ENCODE measurements at regions of chr1 and their contacts with region 1.

Region 1: GRCh38 chr1:169586395-169587255 is at the start of gene F5:
- DNase-seq: peak; percentile 53 to 78 (median 74)
- ATAC-seq: peak; percentile 98
- H3K4me3 ChIP-seq: peak within 1 kb of the TSS; percentile 47
- H3K4me3 Mint-ChIP-seq: peak within 1 kb of the TSS; percentile 81 to 93 (median 90)
- H3K27ac ChIP-seq: peak within 1 kb of the TSS; percentile 66
- H3K27ac Mint-ChIP-seq: peak within 1 kb of the TSS; percentile 50 to 94 (median 86)
- H3K4me1 ChIP-seq: peaks cover 10 to 14% of the 10 kb centered on the region in 2 donors
- H3K4me1 Mint-ChIP-seq: peaks cover 18 to 71% (median 53%) of the 10 kb centered on the region in 7 donors
- H3K27me3 ChIP-seq: no peaks in the 10 kb centered on the region
- H3K27me3 Mint-ChIP-seq: peaks cover 0 to 4% (median 0%) of the 10 kb centered on the region in 5 donors
- total RNA-seq, gene F5: 3.7 to 14.6 (median 5.7) TPM

Region 2: DNA sequence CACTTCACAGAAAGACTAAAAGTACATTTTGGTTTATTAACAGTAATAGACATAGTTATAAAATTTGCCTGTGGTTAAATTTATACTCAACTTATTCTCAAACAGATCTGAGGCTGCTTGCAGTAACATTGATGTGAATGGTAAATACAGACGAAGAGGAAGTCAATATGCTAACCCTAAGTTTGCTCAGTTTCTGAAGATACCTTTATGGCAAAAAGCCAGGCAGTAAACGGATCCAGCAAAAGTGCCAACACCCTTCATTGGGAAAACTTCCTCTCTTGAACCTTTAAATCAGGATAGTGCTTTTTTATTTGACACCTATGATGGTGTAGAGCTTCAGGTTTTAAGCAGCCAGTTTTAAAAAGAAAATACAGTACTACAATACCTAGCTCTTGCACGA is 142.7 kb before region 1 on chr1:
- CTCF ChIA-PET with region 1: no interaction called
- POLR2A ChIA-PET with region 1: no interaction called
- intact Hi-C with region 1: no loop called
- DNase-seq: no peak
- ATAC-seq: no peak
- H3K4me3 ChIP-seq: no peak overlapping the region
- H3K4me3 Mint-ChIP-seq: no peak overlapping the region
- H3K27ac ChIP-seq: no peak overlapping the region
- H3K27ac Mint-ChIP-seq: no peak overlapping the region
- H3K4me1 ChIP-seq: no peaks in the 10 kb centered on the region
- H3K4me1 Mint-ChIP-seq: no peaks in the 10 kb centered on the region
- H3K27me3 ChIP-seq: no peaks in the 10 kb centered on the region
- H3K27me3 Mint-ChIP-seq: peaks cover 15 to 68% (median 18%) of the 10 kb centered on the region in 5 donors

Region 3: DNA sequence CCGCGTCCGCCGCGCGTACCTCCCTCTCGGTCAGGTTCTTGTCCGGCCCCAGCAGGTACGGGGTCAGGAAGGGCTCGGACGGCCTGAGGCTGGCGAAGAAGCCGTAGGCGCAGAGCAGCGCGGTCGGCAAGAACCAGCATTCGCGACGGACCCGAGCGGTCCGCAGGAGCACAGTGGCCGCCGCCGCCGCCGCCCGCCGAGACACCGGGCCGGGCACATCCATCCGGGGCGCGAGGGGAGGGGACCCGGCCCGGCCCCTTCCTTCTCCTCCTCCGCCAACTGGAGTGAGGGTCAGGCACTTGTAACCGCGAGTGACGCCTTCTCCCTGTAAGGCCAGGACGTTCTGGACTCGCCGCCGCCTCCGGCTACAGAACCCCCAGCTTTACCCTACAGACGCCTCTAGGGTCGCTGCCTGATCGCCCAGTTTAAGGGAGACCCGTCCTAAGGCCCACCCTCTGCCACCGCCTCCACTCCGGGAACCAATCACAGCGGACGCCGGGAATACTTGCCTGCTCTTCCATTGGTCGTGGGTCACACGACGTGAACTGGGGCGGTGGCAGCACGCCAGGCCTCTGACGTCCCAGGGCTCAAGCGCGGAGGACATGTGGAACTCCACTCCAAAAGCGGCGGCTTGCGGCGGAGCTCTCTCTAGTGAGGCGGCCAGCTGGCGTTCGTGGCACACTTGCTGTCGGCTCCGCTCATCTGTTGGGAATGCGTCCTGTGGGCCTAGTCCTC is 100.9 kb before region 1 on chr1 and contains the start of gene SLC19A2:
- CTCF ChIA-PET with region 1: no interaction called
- POLR2A ChIA-PET with region 1: no interaction called
- intact Hi-C with region 1: loop called in 1 of 2 experiments (anchors 2 kb)
- DNase-seq: peak; percentile 79 to 94 (median 89)
- ATAC-seq: peak; percentile 99
- H3K4me3 ChIP-seq: peak within 1 kb of the TSS; percentile 66
- H3K4me3 Mint-ChIP-seq: peak within 1 kb of the TSS; percentile 87 to 98 (median 94)
- H3K27ac ChIP-seq: peak within 1 kb of the TSS; percentile 81
- H3K27ac Mint-ChIP-seq: peak within 1 kb of the TSS; percentile 86 to 98 (median 94)
- H3K4me1 ChIP-seq: peaks cover 4 to 12% of the 10 kb centered on the region in 2 donors
- H3K4me1 Mint-ChIP-seq: peaks cover 35 to 56% (median 46%) of the 10 kb centered on the region in 7 donors
- H3K27me3 ChIP-seq: no peaks in the 10 kb centered on the region
- H3K27me3 Mint-ChIP-seq: peaks cover 0 to 8% (median 0%) of the 10 kb centered on the region in 5 donors
- total RNA-seq, gene SLC19A2: 3.7 to 5.9 (median 4.8) TPM

Region 4: GRCh38 chr1:169699711-169700110 is 113.1 kb after region 1 on chr1:
- CTCF ChIA-PET with region 1: interaction called, 11 read pairs
- POLR2A ChIA-PET with region 1: interaction called, 20 read pairs
- intact Hi-C with region 1: loop called (anchors 1 to 5 kb)
- DNase-seq: no peak
- ATAC-seq: no peak
- H3K4me3 ChIP-seq: no peak overlapping the region
- H3K4me3 Mint-ChIP-seq: peak overlapping the region in 9 of 10 donors; percentile 51 to 99 (median 54)
- H3K27ac ChIP-seq: peak overlapping the region; percentile 70
- H3K27ac Mint-ChIP-seq: peak overlapping the region in 6 of 9 donors; percentile 52 to 97 (median 88)
- H3K4me1 ChIP-seq: peaks cover 94 to 99% of the 10 kb centered on the region in 2 donors
- H3K4me1 Mint-ChIP-seq: peaks cover 46 to 98% (median 90%) of the 10 kb centered on the region in 7 donors
- H3K27me3 ChIP-seq: no peaks in the 10 kb centered on the region
- H3K27me3 Mint-ChIP-seq: no peaks in the 10 kb centered on the region

Region 5: GRCh38 chr1:169794530-169795416 is 208.1 kb after region 1 on chr1 and contains the start of gene METTL18:
- CTCF ChIA-PET with region 1: interaction called, 3 read pairs
- POLR2A ChIA-PET with region 1: no interaction called
- intact Hi-C with region 1: loop called (anchors 2 to 5 kb)
- DNase-seq: peak; percentile 72 to 96 (median 92)
- ATAC-seq: peak; percentile 100
- H3K4me3 ChIP-seq: peak within 1 kb of the TSS; percentile 98
- H3K4me3 Mint-ChIP-seq: peak within 1 kb of the TSS; percentile 90 to 100 (median 100)
- H3K27ac ChIP-seq: peak within 1 kb of the TSS; percentile 94
- H3K27ac Mint-ChIP-seq: peak within 1 kb of the TSS; percentile 97 to 100 (median 99)
- H3K4me1 ChIP-seq: peaks cover 10 to 28% of the 10 kb centered on the region in 2 donors
- H3K4me1 Mint-ChIP-seq: peaks cover 26 to 60% (median 56%) of the 10 kb centered on the region in 7 donors
- H3K27me3 ChIP-seq: no peaks in the 10 kb centered on the region
- H3K27me3 Mint-ChIP-seq: no peaks in the 10 kb centered on the region
- total RNA-seq, gene METTL18: 4.9 to 21.1 (median 13.4) TPM

Region 6: GRCh38 chr1:169886422-169886821 is 299.8 kb after region 1 on chr1:
- CTCF ChIA-PET with region 1: no interaction called
- POLR2A ChIA-PET with region 1: no interaction called
- intact Hi-C with region 1: loop called (anchors 2 to 5 kb)
- DNase-seq: no peak
- ATAC-seq: no peak
- H3K4me3 ChIP-seq: no peak overlapping the region
- H3K4me3 Mint-ChIP-seq: no peak overlapping the region
- H3K27ac ChIP-seq: no peak overlapping the region
- H3K27ac Mint-ChIP-seq: no peak overlapping the region
- H3K4me1 ChIP-seq: peaks cover 10 to 16% of the 10 kb centered on the region in 2 donors
- H3K4me1 Mint-ChIP-seq: peaks cover 18 to 66% (median 56%) of the 10 kb centered on the region in 7 donors
- H3K27me3 ChIP-seq: no peaks in the 10 kb centered on the region
- H3K27me3 Mint-ChIP-seq: no peaks in the 10 kb centered on the region

Region 7: DNA sequence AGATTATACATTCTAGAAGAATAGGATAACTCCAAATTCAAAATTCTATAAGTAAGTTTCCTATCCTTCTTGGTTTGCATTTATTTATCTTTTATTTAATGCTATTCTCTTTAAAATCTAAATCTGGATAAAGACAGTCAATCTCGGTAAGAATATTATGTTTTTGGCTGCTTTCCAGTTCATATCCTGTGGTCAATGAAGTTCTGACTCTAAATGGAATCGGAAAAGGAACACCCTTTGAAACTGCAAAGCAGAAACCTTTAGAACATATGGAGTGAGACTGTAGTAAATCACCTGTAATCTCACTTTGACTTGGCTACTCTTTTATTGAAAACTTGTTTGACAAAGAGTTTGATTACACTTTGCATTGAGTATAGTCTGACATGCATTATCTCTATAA is 402.6 kb after region 1 on chr1:
- CTCF ChIA-PET with region 1: no interaction called
- POLR2A ChIA-PET with region 1: no interaction called
- intact Hi-C with region 1: no loop called
- DNase-seq: no peak
- ATAC-seq: no peak
- H3K4me3 ChIP-seq: no peak overlapping the region
- H3K4me3 Mint-ChIP-seq: no peak overlapping the region
- H3K27ac ChIP-seq: no peak overlapping the region
- H3K27ac Mint-ChIP-seq: no peak overlapping the region
- H3K4me1 ChIP-seq: no peaks in the 10 kb centered on the region
- H3K4me1 Mint-ChIP-seq: no peaks in the 10 kb centered on the region
- H3K27me3 ChIP-seq: no peaks in the 10 kb centered on the region
- H3K27me3 Mint-ChIP-seq: no peaks in the 10 kb centered on the region